ENCODE measurements at regions of chr15 and their contacts with region 1.

Region 1: GRCh38 chr15:67433495-67434099 is 87.3 kb upstream of the C15orf61 start:
- DNase-seq: peak; percentile 39
- H3K4me3 ChIP-seq: no peak overlapping the region
- H3K27ac ChIP-seq: no peak overlapping the region
- H3K4me1 ChIP-seq: no peaks in the 10 kb centered on the region
- H3K27me3 ChIP-seq: no peaks in the 10 kb centered on the region
- CTCF ChIP-seq: peak; percentile 79 to 83

Region 2: DNA sequence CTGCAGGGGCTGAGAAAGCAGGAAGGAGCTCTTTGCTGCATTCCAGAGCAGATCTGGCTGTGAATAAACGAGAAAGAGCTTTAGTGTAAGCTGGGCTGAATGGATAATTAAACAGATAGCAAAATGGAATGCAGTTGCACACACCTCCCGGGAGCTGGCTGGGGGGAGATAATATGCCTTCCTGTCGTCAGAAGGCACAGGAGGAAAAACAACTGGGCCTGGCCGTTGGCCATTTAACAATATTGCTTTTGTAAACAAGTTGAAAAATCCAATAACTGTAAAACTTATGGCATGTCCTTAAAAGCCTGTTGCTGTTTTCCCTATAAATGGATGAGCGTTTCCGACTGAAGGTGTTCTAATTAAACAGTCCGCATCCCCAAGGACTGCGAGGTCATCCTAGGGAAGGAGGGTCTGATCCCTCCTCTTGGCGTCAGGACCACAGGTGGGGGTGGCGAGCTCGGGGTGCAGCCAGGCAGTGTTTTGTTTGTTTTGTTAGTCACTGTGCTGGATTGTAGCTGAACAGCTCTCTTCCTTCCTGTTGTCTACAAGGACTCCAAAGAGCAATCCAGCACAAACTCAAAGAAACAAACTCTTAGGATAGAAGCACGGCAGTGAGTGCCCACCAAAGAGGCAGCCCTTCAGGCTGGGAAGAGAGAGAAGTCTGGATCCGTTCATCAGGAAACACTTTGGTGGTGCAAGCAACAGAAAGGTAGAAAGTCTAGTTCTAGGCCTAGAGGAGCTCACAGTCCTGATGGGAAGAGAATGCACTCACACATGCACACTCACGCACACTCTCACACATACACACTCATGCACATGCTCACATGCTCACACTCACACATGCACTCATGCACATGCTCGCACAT is 501.6 kb before region 1 on chr15:
- CTCF ChIA-PET with region 1: no interaction called
- dilution Hi-C with region 1: no loop called
- in situ Hi-C with region 1: loop called in 1 of 2 experiments (anchors 10 kb)
- intact Hi-C with region 1: no loop called
- DNase-seq: peak; percentile 54
- H3K4me3 ChIP-seq: no peak overlapping the region
- H3K27ac ChIP-seq: no peak overlapping the region
- H3K4me1 ChIP-seq: peaks cover 19% of the 10 kb centered on the region
- H3K27me3 ChIP-seq: no peaks in the 10 kb centered on the region
- CTCF ChIP-seq: no peak

Measured in mammary epithelial cell (primary cell).